Activated CD8-positive, alpha-beta memory T cell treated with anti-CD3 and anti-CD28 coated beads, Interleukin-2, amount 10 ng/mL, durations not matched to agents 7 days and 5 days (primary cell): ENCODE measurements at regions of chr17 and their contacts with region 1.

Region 1: GRCh38 chr17:40474419-40475002 is 26.9 kb downstream of the TNS4 start:
- DNase-seq: no peak
- ATAC-seq: no peak
- H3K4me3 Mint-ChIP-seq: no peak overlapping the region
- H3K27ac Mint-ChIP-seq: no peak overlapping the region
- H3K4me1 Mint-ChIP-seq: peaks cover 13% of the 10 kb centered on the region
- H3K27me3 Mint-ChIP-seq: peaks cover 9% of the 10 kb centered on the region

Region 2: DNA sequence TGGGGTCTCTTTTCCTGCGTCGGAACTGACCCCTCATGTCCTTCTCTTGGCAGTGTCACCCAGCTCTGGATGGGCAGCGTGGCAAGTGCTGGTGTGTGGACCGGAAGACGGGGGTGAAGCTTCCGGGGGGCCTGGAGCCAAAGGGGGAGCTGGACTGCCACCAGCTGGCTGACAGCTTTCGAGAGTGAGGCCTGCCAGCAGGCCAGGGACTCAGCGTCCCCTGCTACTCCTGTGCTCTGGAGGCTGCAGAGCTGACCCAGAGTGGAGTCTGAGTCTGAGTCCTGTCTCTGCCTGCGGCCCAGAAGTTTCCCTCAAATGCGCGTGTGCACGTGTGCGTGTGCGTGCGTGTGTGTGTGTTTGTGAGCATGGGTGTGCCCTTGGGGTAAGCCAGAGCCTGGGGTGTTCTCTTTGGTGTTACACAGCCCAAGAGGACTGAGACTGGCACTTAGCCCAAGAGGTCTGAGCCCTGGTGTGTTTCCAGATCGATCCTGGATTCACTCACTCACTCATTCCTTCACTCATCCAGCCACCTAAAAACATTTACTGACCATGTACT is 18.0 kb before region 1 on chr17:
- CTCF ChIA-PET with region 1: interaction called, 13 read pairs
- DNase-seq: no peak
- ATAC-seq: no peak
- H3K4me3 Mint-ChIP-seq: no peak overlapping the region
- H3K27ac Mint-ChIP-seq: no peak overlapping the region
- H3K4me1 Mint-ChIP-seq: no peaks in the 10 kb centered on the region
- H3K27me3 Mint-ChIP-seq: peaks cover 3% of the 10 kb centered on the region

Region 3: DNA sequence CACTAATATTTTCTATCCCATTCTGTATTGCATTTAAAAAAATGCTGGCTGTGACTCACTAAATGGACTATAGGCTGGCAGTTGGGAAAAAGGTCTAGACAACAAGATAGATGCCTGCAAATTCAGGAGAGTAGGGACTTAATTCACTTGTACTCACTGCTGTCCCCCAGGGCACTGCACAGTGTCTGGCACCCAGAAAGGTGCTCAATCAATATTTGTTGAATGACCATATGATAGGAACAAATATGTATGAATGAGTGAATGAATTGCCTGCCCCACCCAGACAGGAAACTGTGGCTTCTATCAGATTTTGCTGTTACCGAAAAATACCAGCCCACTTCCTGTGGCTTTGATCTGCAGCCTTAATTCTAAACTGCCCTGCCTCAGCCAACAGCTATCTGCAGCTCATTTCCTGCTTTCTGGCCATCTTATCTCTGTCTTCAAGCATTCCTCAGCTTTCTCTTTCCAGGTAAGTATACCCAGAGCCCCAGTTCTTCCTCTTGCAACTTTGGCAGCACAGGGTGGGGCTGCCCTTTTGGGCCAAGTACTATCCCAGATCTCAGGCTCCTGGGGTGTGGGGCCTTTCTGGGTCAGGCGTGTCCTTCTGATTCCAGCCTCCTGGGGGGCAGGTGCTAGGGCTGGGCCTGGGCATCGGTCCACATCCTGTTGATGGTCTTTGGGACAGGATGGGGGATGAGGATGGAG is 42.2 kb after region 1 on chr17:
- CTCF ChIA-PET with region 1: interaction called, 16 read pairs
- DNase-seq: peak; percentile 93
- ATAC-seq: peak; percentile 79
- H3K4me3 Mint-ChIP-seq: peak overlapping the region; percentile 70
- H3K27ac Mint-ChIP-seq: peak overlapping the region; percentile 91
- H3K4me1 Mint-ChIP-seq: peaks cover 60% of the 10 kb centered on the region
- H3K27me3 Mint-ChIP-seq: peaks cover 21% of the 10 kb centered on the region

Region 4: DNA sequence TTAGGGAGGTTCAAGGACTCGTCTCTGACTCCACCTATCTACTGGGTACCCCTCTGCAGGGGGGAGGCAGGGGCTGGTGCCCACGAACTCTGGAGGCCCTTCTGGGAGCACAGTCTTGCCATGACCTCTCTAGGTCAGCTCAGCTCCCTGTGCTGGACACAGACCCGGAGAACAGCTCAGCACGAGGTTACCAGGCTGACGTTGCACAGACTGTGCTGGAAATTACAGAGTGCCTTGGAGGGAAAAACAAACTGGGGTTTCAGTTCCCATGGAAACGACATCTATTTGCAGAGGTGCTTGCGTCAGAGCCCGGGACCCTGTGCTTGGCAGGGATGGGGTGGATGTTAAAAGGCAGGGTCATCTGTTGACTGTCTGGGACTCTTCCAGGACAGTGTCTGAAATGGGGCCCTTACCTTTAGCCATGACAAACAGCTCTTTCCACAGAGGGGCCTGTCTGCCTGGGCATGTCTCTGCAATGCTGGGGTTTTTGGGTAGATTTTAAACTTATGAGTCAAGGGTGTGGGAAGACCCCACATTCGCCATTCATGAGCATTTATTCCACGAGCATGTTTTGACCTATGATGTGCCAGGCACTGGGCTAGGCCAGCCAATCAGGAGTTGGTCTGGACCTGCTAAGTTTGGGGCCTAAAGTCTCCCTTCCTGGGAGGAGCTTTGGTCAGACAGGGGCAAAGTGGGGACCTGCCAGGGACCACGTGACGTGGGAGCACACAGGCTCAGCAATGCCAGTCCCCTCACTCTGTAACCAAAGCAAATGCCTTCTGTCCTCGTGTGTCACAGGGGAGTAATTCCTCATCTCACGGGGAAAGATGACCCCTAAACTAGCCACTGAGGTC is 68.3 kb after region 1 on chr17:
- CTCF ChIA-PET with region 1: interaction called, 10 read pairs
- DNase-seq: peak; percentile 49
- ATAC-seq: peak; percentile 6
- H3K4me3 Mint-ChIP-seq: no peak overlapping the region
- H3K27ac Mint-ChIP-seq: peak overlapping the region; percentile 52
- H3K4me1 Mint-ChIP-seq: peaks cover 71% of the 10 kb centered on the region
- H3K27me3 Mint-ChIP-seq: peaks cover 3% of the 10 kb centered on the region